CD8-positive, alpha-beta memory T cell (primary cell): ENCODE measurements at regions of chr1 and their contacts with region 1.

Region 1: GRCh38 chr1:205061665-205062069 is 18.7 kb downstream of the CNTN2 start:
- DNase-seq: peak; percentile 27 to 68 (median 30)
- H3K4me3 ChIP-seq: no peak overlapping the region
- H3K4me3 Mint-ChIP-seq: no peak overlapping the region
- H3K27ac ChIP-seq: no peak overlapping the region
- H3K27ac Mint-ChIP-seq: no peak overlapping the region
- H3K4me1 ChIP-seq: no peaks in the 10 kb centered on the region
- H3K4me1 Mint-ChIP-seq: no peaks in the 10 kb centered on the region
- H3K27me3 ChIP-seq: no peaks in the 10 kb centered on the region
- H3K27me3 Mint-ChIP-seq: no peaks in the 10 kb centered on the region

Region 2: DNA sequence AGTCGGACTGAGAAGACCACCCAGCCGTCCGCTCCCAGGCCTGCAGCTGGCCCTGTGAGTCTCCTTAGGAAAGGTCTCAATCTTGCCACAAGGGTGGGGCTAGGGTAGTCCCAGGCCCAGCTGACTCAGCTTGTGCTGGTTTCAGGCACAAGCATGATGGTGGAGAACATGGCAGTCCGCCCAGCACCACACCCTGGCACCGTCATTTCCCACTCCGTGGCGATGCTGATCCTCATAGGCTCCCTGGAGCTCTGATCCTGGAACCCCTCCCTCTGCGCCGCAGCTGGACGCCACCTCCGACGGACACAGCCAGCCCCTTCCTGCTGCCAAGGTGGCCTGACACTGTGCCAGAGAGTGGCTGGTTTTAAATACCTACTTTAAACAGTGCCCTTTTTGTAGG is 11.8 kb after region 1 on chr1:
- CTCF ChIA-PET with region 1: interaction called, 12 read pairs
- POLR2A ChIA-PET with region 1: no interaction called
- DNase-seq: no peak
- H3K4me3 ChIP-seq: no peak overlapping the region
- H3K4me3 Mint-ChIP-seq: no peak overlapping the region
- H3K27ac ChIP-seq: no peak overlapping the region
- H3K27ac Mint-ChIP-seq: peak overlapping the region in 1 of 8 donors; percentile 40
- H3K4me1 ChIP-seq: no peaks in the 10 kb centered on the region
- H3K4me1 Mint-ChIP-seq: no peaks in the 10 kb centered on the region
- H3K27me3 ChIP-seq: no peaks in the 10 kb centered on the region
- H3K27me3 Mint-ChIP-seq: peaks cover 0 to 2% of the 10 kb centered on the region in 2 donors